B cell (primary cell): ENCODE measurements at regions of chr6 and their contacts with region 1.

Region 1: DNA sequence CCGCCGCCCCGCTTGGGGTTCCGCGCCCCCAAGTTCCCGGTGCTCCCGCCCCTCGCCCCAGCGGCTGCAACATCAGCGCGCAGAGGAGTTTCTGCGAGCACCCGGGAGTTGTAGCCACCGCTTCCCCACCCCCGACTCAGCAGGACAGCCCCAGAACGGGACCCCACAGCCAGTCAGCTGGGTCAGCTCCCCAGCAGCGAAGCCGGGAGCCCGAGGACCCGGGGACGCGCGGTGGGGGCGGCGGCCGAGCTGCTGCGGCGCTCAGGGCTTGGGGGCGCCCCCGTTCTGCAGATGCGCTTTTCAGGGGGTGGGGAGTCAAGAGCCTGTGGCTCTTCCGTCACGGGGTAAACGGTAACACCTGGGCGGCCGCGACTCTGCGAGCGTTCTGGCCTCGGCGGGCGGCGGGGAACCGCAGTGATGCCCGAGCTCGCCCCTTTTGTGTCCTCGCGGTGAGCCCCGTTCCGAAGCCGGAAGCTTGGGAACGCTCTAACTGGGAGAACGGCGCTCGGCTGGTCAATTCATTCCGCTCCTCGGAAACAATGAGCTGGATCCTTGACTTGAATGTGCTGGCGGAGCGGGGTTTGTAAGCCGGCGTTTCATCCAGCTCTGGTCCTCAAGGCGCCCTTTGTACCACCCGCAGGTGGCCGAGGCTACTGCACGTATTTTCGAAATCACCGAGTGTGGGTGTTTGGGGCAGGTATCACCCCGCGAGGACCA is 774 bp downstream of the PLEKHG1 start:
- DNase-seq: peak; percentile 95
- ATAC-seq: peak; percentile 75
- H3K4me3 ChIP-seq: peak overlapping the region; percentile 56 to 83 (median 73)
- H3K4me3 Mint-ChIP-seq: peak overlapping the region; percentile 99
- H3K27ac ChIP-seq: peak overlapping the region; percentile 97 to 99
- H3K27ac Mint-ChIP-seq: peak overlapping the region; percentile 99
- H3K4me1 ChIP-seq: peaks cover 52 to 54% of the 10 kb centered on the region in 2 donors
- H3K4me1 Mint-ChIP-seq: peaks cover 65% of the 10 kb centered on the region
- H3K27me3 ChIP-seq: no peaks in the 10 kb centered on the region
- H3K27me3 Mint-ChIP-seq: no peaks in the 10 kb centered on the region
- CTCF ChIP-seq: peak; percentile 76

Region 2: GRCh38 chr6:150617496-150618460 is 17.3 kb after region 1 on chr6:
- CTCF ChIA-PET with region 1: interaction called, 31 read pairs
- POLR2A ChIA-PET with region 1: interaction called, 32 read pairs
- intact Hi-C with region 1: no loop called
- DNase-seq: peak; percentile 23
- ATAC-seq: no peak
- H3K4me3 ChIP-seq: peak overlapping the region in 1 of 5 experiments; percentile 9
- H3K4me3 Mint-ChIP-seq: peak overlapping the region; percentile 24
- H3K27ac ChIP-seq: peak overlapping the region; percentile 60 to 65
- H3K27ac Mint-ChIP-seq: peak overlapping the region; percentile 65
- H3K4me1 ChIP-seq: peaks cover 72 to 80% of the 10 kb centered on the region in 2 donors
- H3K4me1 Mint-ChIP-seq: peaks cover 92% of the 10 kb centered on the region
- H3K27me3 ChIP-seq: no peaks in the 10 kb centered on the region
- H3K27me3 Mint-ChIP-seq: no peaks in the 10 kb centered on the region
- CTCF ChIP-seq: no peak

Region 3: DNA sequence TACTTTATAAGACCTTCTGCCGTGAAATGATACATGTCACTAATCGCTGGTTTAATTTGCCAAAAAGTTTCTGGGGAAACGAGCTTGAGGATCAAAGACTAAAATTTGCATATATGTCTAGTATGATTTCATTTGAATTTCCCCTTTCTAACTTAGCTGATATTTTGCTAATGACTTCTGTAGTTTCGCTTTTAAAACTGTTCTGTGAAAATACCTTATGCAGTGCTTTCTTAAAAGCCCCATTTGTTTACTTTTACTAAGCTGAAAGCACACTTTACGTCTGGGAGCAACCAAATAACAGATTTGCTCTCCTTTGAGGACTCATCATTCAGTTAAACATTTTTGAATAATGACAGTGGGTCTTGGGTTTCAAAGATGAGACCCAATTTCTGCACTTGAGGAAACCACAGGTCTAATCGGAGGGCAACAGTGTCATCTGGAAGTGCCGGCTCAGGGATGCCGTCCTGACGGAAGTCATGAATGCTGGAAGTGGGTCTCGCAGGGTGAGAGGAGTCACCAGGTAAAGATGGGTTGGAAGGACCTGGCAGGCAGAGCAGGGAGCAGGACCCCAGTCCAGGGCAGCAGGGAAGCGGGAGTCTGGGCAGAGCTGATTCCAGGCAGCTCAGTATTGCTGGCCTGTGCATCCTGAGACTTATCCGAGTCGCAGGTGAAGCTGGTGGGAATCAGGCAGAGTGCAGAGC is 32.5 kb after region 1 on chr6:
- CTCF ChIA-PET with region 1: interaction called, 77 read pairs
- POLR2A ChIA-PET with region 1: interaction called, 84 read pairs
- intact Hi-C with region 1: loop called (anchors 1 kb)
- DNase-seq: peak; percentile 80
- ATAC-seq: peak; percentile 40
- H3K4me3 ChIP-seq: peak overlapping the region; percentile 55 to 85 (median 79)
- H3K4me3 Mint-ChIP-seq: peak overlapping the region; percentile 98
- H3K27ac ChIP-seq: peak overlapping the region; percentile 91 to 94
- H3K27ac Mint-ChIP-seq: peak overlapping the region; percentile 93
- H3K4me1 ChIP-seq: peaks cover 79 to 81% of the 10 kb centered on the region in 2 donors
- H3K4me1 Mint-ChIP-seq: peaks cover 85% of the 10 kb centered on the region
- H3K27me3 ChIP-seq: no peaks in the 10 kb centered on the region
- H3K27me3 Mint-ChIP-seq: no peaks in the 10 kb centered on the region
- CTCF ChIP-seq: no peak

Region 4: DNA sequence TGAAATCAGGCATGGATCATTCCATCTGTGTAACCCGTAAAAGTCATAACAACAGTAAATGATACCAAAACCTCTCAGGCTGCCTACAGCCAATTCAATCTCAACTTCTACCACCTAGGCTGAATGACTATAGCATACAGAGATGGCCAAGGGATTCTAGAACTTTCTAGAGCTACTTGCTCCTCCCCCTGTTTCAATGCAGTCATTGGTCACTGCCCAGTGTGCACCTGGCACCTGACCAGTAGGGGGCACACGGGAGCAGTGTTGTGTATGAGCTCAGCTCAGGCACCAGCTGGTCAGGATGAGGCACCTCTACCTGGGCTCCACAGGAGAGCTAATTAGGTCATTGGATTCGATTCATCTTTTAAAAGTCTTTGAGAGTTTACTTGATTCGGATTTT is 85.4 kb after region 1 on chr6:
- CTCF ChIA-PET with region 1: interaction called, 22 read pairs
- POLR2A ChIA-PET with region 1: interaction called, 4 read pairs
- intact Hi-C with region 1: loop called (anchors 2 kb)
- DNase-seq: peak; percentile 73
- ATAC-seq: peak; percentile 44
- H3K4me3 ChIP-seq: no peak overlapping the region
- H3K4me3 Mint-ChIP-seq: no peak overlapping the region
- H3K27ac ChIP-seq: peak overlapping the region; percentile 72 to 96
- H3K27ac Mint-ChIP-seq: peak overlapping the region; percentile 46
- H3K4me1 ChIP-seq: peaks cover 89 to 98% of the 10 kb centered on the region in 2 donors
- H3K4me1 Mint-ChIP-seq: peaks cover 93% of the 10 kb centered on the region
- H3K27me3 ChIP-seq: no peaks in the 10 kb centered on the region
- H3K27me3 Mint-ChIP-seq: no peaks in the 10 kb centered on the region
- CTCF ChIP-seq: peak; percentile 75

Region 5: GRCh38 chr6:150741633-150742504 is 141.4 kb after region 1 on chr6:
- CTCF ChIA-PET with region 1: interaction called, 11 read pairs
- POLR2A ChIA-PET with region 1: interaction called, 3 read pairs
- intact Hi-C with region 1: loop called (anchors 2 kb)
- DNase-seq: peak; percentile 77
- ATAC-seq: peak; percentile 33
- H3K4me3 ChIP-seq: no peak overlapping the region
- H3K4me3 Mint-ChIP-seq: no peak overlapping the region
- H3K27ac ChIP-seq: peak overlapping the region in 1 of 2 donors; percentile 31
- H3K27ac Mint-ChIP-seq: peak overlapping the region; percentile 27
- H3K4me1 ChIP-seq: peaks cover 13 to 17% of the 10 kb centered on the region in 2 donors
- H3K4me1 Mint-ChIP-seq: peaks cover 67% of the 10 kb centered on the region
- H3K27me3 ChIP-seq: no peaks in the 10 kb centered on the region
- H3K27me3 Mint-ChIP-seq: no peaks in the 10 kb centered on the region
- CTCF ChIP-seq: peak; percentile 82

Region 6: DNA sequence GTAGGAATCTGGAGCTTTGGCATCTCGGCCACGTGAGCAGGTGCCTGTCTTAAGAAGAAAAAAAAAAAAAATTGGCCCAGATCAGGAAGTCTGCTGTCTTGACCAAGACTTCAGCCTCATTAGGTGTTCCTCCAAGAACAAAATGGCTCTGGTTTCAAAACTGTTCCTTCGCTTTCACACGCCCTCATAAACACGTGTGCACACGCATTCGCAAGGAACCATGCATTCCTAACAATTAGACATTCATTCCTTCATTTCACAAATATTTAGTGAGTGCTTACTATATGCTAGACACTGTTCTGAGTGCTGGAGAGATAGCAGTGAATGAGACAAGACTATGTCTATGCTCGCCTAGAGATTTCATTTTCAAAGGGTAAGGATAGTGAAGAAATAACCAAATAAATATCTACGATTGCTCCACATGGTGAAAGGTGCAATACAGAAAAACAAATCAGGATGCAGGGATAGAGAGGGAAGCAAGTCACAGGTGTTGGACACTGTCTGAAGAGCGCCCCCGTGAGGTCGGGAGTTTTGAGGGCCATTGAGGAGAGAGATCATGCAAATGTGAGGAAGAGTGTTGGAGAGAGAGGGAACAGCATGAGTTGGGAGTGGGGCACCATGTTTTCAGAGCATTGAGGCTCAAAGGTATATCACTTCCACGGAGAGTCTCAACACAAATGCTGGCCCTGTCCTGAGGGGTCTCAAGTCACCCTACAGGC is 946.6 kb after region 1 on chr6:
- CTCF ChIA-PET with region 1: no interaction called
- POLR2A ChIA-PET with region 1: no interaction called
- intact Hi-C with region 1: no loop called
- DNase-seq: no peak
- ATAC-seq: no peak
- H3K4me3 ChIP-seq: no peak overlapping the region
- H3K4me3 Mint-ChIP-seq: no peak overlapping the region
- H3K27ac ChIP-seq: no peak overlapping the region
- H3K27ac Mint-ChIP-seq: no peak overlapping the region
- H3K4me1 ChIP-seq: no peaks in the 10 kb centered on the region
- H3K4me1 Mint-ChIP-seq: no peaks in the 10 kb centered on the region
- H3K27me3 ChIP-seq: no peaks in the 10 kb centered on the region
- H3K27me3 Mint-ChIP-seq: peaks cover 12% of the 10 kb centered on the region
- CTCF ChIP-seq: no peak